Activated CD4-positive, alpha-beta memory T cell treated with anti-CD3 and anti-CD28 coated beads for 36 hours (primary cell): ENCODE measurements at regions of chr4 and their contacts with region 1.

Region 1: DNA sequence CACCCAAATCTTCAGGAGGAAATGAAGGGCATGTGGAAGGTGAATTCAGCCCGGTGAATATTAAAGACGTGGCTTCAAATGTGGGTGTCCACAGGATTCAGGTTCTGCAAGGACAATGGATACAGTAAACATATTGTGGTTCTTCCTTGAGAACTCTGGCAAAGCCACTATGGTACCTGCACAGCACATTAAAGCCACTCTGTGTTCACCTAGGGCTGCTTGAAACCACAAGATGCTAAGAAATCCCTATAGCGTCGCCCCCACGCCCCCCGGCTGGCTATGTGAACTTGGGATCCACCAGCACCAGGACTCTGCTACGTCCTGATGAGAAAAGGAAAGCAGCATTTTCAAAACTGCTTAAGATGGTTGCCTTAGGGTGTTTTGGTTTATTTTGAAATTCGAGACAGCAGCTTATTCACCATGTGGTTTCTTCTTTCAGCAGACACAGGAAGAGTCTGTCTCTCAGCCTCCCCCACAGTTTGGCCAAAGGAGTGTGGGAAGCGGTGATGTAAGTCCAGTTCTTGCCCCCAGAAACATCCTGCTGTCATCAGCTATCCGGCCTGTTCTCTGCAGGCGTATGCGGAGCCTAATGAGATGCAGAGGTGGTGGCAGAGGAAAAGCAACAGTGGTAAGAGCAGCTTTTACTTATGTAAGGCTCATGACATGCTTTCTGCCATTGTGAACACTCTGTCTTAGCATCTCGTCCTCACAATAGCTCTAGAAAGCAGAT is 111.5 kb downstream of the AFAP1 start:
- DNase-seq: peak; percentile 84
- H3K4me3 Mint-ChIP-seq: peak overlapping the region; percentile 25
- H3K27ac Mint-ChIP-seq: peak overlapping the region; percentile 90
- H3K4me1 Mint-ChIP-seq: peaks cover 69% of the 10 kb centered on the region
- H3K27me3 Mint-ChIP-seq: no peaks in the 10 kb centered on the region

Region 2: DNA sequence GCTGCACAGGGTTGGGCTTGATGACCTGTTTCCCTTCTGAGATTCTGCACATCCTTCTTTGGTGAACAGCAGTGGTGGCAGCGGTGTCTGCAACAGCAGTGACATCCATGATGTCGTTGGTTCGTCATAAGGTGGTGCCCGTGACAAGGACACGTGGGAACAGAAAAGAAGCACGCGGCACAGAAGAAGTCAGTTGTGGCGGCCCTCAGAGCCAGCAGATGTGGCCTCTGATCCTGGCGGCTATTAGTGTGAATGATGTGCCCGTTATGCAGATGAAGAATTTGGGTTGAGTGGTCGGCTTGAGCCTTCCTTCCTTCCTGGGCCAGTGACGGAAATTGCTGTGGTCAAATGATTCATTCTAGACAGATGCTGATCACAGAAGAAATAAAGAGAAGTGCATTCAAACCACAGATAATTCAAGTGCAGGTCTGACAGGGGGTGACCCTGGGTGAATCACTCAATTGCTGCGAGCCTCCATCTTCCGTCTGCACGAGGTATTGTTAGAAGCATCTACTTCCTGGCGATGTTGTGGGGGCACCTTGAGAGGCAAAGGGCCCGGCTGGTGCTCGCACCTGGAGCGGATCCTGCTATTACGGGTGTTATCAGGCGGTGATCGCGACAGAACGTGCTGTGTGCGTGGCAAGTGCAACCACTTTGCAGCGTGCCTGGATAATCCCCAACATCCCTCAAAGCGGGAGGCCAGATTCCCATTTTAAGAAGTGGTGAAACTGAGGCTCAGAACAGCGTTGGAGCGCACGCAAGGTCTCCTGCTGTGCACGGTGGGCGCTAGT is 178.2 kb before region 1 on chr4:
- CTCF ChIA-PET with region 1: no interaction called
- POLR2A ChIA-PET with region 1: no interaction called
- intact Hi-C with region 1: loop called (anchors 1 kb)
- DNase-seq: peak; percentile 77
- H3K4me3 Mint-ChIP-seq: no peak overlapping the region
- H3K27ac Mint-ChIP-seq: peak overlapping the region; percentile 77
- H3K4me1 Mint-ChIP-seq: peaks cover 43% of the 10 kb centered on the region
- H3K27me3 Mint-ChIP-seq: peaks cover 6% of the 10 kb centered on the region

Region 3: GRCh38 chr4:7811536-7812191 is 16.5 kb before region 1 on chr4:
- CTCF ChIA-PET with region 1: interaction called, 6 read pairs
- POLR2A ChIA-PET with region 1: interaction called, 3 read pairs
- intact Hi-C with region 1: loop called (anchors 2 kb)
- DNase-seq: no peak
- H3K4me3 Mint-ChIP-seq: no peak overlapping the region
- H3K27ac Mint-ChIP-seq: no peak overlapping the region
- H3K4me1 Mint-ChIP-seq: peaks cover 22% of the 10 kb centered on the region
- H3K27me3 Mint-ChIP-seq: no peaks in the 10 kb centered on the region

Region 4: GRCh38 chr4:7843831-7844593 is 15.9 kb after region 1 on chr4:
- CTCF ChIA-PET with region 1: interaction called, 30 read pairs
- POLR2A ChIA-PET with region 1: interaction called, 3 read pairs
- intact Hi-C with region 1: no loop called
- DNase-seq: peak; percentile 79
- H3K4me3 Mint-ChIP-seq: no peak overlapping the region
- H3K27ac Mint-ChIP-seq: peak overlapping the region; percentile 56
- H3K4me1 Mint-ChIP-seq: peaks cover 35% of the 10 kb centered on the region
- H3K27me3 Mint-ChIP-seq: no peaks in the 10 kb centered on the region

Region 5: DNA sequence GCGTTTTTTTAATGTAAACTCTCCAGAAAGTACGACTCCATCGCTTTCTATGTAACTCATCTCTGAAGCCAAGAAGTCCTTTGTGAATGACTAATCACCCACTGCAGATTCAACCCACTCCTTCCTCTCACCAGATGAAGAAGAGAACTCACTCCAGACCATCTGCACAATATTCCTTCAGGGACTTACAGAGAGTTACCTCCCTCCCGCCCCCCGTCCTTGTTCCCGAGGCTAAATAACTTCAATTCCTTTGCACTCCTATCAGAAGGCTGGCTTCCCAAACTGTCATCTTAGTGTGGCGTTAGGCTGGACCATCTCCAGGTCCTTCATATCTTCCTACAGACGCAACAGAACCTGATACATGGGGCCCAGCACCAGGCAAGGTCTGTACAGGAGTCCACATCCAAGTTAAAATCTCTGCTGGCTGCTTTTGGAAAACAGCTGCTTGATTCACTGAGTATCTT is 29.1 kb after region 1 on chr4:
- CTCF ChIA-PET with region 1: interaction called, 4 read pairs
- POLR2A ChIA-PET with region 1: interaction called, 6 read pairs
- intact Hi-C with region 1: loop called (anchors 1 kb)
- DNase-seq: no peak
- H3K4me3 Mint-ChIP-seq: peak overlapping the region; percentile 17
- H3K27ac Mint-ChIP-seq: peak overlapping the region; percentile 82
- H3K4me1 Mint-ChIP-seq: peaks cover 75% of the 10 kb centered on the region
- H3K27me3 Mint-ChIP-seq: no peaks in the 10 kb centered on the region

Region 6: GRCh38 chr4:7867701-7868435 is 39.7 kb after region 1 on chr4:
- CTCF ChIA-PET with region 1: no interaction called
- POLR2A ChIA-PET with region 1: interaction called, 3 read pairs
- intact Hi-C with region 1: loop called (anchors 1 kb)
- DNase-seq: peak; percentile 68
- H3K4me3 Mint-ChIP-seq: no peak overlapping the region
- H3K27ac Mint-ChIP-seq: peak overlapping the region; percentile 83
- H3K4me1 Mint-ChIP-seq: peaks cover 33% of the 10 kb centered on the region
- H3K27me3 Mint-ChIP-seq: peaks cover 1% of the 10 kb centered on the region

Region 7: DNA sequence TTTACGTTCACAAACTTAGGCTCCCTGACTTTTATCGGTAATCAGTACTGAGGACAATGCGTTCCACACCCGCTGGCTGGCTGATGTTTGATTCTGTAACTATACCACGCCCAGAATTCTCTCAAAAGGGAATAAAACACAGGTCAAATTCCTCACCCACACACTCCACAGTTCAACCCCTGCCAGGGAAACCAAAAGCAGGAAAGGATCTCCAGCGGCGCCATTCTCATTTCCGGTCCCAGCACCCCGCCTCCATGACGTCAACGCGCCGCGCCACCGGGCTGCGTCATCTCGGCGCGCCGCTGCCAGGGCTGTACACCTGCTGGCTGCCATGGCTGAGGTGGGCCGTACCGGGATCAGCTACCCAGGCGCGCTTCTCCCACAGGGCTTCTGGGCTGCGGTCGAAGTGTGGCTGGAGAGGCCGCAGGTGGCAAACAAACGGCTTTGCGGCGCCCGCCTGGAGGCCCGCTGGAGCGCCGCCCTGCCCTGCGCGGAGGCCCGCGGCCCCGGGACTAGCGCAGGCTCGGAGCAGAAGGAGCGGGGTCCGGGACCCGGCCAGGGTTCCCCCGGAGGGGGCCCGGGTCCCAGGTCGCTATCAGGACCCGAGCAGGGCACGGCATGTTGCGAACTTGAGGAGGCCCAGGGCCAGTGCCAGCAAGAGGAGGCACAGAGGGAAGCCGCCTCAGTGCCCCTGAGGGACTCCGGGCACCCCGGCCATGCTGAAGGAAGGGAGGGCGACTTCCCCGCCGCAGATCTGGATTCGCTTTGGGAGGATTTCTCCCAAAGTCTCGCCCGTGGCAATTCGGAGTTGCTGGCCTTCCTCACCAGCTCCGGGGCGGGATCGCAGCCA is 612.6 kb after region 1 on chr4 and contains the starts of genes ACOX3 and TRMT44:
- CTCF ChIA-PET with region 1: no interaction called
- POLR2A ChIA-PET with region 1: no interaction called
- intact Hi-C with region 1: loop called (anchors 5 kb)
- DNase-seq: peak; percentile 97
- H3K4me3 Mint-ChIP-seq: peak within 1 kb of the TSS; percentile 95
- H3K27ac Mint-ChIP-seq: peak within 1 kb of the TSS; percentile 99
- H3K4me1 Mint-ChIP-seq: peaks cover 73% of the 10 kb centered on the region
- H3K27me3 Mint-ChIP-seq: no peaks in the 10 kb centered on the region
- total RNA-seq, gene ACOX3: 42.3 to 45.8 TPM
- total RNA-seq, gene TRMT44: 24.1 to 29.2 TPM